OCI-LY7 (cell line): ENCODE measurements at regions of chr1 and their contacts with region 1.

Region 1: DNA sequence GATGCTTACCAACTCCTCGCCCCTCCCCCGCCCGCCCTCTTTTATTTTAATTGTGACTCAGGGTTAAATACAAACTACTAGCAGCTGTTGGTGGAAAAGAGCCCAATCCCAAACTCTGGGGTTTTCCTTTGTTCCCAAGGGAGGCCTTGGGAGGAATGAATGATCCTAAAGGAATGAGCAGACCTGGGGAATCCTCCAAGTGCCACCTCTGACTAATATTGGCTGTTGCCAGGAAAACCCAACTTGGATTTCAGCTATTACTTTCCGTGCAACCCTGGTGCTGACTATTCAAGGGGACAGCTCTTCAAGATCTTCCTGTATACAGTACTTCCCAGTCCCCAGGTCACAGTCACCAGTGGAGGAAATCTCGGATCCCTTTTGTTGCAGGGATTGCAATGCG is 1.3 kb upstream of the S100A10 start:
- DNase-seq: no peak
- H3K4me3 ChIP-seq: no peak overlapping the region
- H3K27ac ChIP-seq: no peak overlapping the region
- H3K4me1 ChIP-seq: no peaks in the 10 kb centered on the region
- CTCF ChIP-seq: no peak

Region 2: GRCh38 chr1:151888972-151889570 is 105.9 kb before region 1 on chr1:
- CTCF ChIA-PET with region 1: no interaction called
- POLR2A ChIA-PET with region 1: interaction called, 3 read pairs
- intact Hi-C with region 1: loop called (anchors 1 kb)
- DNase-seq: peak; percentile 44
- H3K4me3 ChIP-seq: no peak overlapping the region
- H3K27ac ChIP-seq: no peak overlapping the region
- H3K4me1 ChIP-seq: peaks cover 4% of the 10 kb centered on the region
- CTCF ChIP-seq: peak; percentile 80

Region 3: DNA sequence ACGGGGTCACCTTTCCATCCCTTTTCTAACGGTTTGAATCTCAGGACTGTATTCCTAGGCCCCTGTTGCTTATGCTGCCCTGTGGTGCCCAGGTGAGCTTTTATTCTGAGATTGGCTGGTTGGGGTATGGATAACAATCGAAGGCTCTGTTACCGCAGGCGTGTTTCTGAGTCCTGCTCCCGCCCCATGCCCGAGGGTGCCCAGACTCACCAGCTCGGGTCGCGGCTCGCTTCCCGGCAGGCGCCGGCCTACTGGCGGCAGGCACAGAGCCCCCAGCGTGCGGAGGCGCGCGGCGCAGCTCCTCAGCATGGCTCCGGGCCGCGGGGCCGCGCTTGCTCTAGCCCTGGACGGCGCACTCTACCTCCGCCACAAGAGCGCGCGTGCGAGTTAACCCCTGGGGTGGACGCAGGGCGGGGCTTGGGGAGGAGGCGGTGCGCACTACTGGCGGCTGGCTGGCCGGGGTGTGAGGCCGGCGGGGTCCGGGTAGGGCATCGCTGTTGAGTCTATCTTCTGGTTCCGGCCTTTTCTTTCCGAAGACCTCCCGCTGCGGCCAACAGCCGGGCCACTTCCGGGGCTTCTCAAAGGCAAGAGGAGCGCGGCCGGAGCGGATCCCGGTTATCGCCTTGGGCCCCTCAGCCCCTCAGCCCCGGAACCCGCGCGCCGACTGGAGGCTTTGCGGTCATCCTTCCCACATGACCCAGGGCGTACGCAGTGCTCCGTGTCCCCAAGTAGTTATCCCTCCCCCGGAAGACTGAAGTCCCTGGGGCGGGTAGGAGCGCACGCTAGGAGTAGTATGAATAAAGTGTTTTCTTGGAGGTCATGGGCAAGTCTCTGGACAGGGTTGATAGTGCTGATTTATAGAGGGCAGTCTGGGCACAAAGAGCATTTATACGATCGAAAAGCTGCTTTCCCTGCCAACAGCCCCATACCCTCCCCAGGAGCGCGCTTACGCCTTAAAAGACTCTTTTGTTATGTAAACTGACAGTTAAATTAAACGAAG is 85.5 kb before region 1 on chr1 and contains the start of gene THEM4:
- CTCF ChIA-PET with region 1: no interaction called
- POLR2A ChIA-PET with region 1: no interaction called
- intact Hi-C with region 1: loop called (anchors 5 kb)
- DNase-seq: peak; percentile 93
- H3K4me3 ChIP-seq: peak within 1 kb of the TSS; percentile 70
- H3K27ac ChIP-seq: peak within 1 kb of the TSS; percentile 26
- H3K4me1 ChIP-seq: peaks cover 11% of the 10 kb centered on the region
- CTCF ChIP-seq: peak; percentile 47
- total RNA-seq, gene THEM4: 7.2 TPM in 2 replicates

Region 4: GRCh38 chr1:151934048-151934493 is 60.9 kb before region 1 on chr1:
- CTCF ChIA-PET with region 1: no interaction called
- POLR2A ChIA-PET with region 1: no interaction called
- intact Hi-C with region 1: loop called (anchors 1 kb)
- DNase-seq: peak; percentile 64
- H3K4me3 ChIP-seq: no peak overlapping the region
- H3K27ac ChIP-seq: no peak overlapping the region
- H3K4me1 ChIP-seq: peaks cover 6% of the 10 kb centered on the region
- CTCF ChIP-seq: peak; percentile 90